ENCODE measurements at regions of chr3 and their contacts with region 1.

Region 1: GRCh38 chr3:194632809-194633348 is 340 bp downstream of the TMEM44 start:
- DNase-seq: no peak
- ATAC-seq: peak; percentile 51
- H3K4me3 ChIP-seq: peak overlapping the region; percentile 30 to 79 (median 58)
- H3K4me3 Mint-ChIP-seq: peak overlapping the region; percentile 86
- H3K27ac ChIP-seq: no peak overlapping the region
- H3K27ac Mint-ChIP-seq: peak overlapping the region; percentile 56
- H3K4me1 ChIP-seq: peaks cover 4 to 5% of the 10 kb centered on the region in 2 donors
- H3K4me1 Mint-ChIP-seq: peaks cover 9% of the 10 kb centered on the region
- H3K27me3 ChIP-seq: no peaks in the 10 kb centered on the region
- H3K27me3 Mint-ChIP-seq: no peaks in the 10 kb centered on the region
- CTCF ChIP-seq: no peak

Region 2: DNA sequence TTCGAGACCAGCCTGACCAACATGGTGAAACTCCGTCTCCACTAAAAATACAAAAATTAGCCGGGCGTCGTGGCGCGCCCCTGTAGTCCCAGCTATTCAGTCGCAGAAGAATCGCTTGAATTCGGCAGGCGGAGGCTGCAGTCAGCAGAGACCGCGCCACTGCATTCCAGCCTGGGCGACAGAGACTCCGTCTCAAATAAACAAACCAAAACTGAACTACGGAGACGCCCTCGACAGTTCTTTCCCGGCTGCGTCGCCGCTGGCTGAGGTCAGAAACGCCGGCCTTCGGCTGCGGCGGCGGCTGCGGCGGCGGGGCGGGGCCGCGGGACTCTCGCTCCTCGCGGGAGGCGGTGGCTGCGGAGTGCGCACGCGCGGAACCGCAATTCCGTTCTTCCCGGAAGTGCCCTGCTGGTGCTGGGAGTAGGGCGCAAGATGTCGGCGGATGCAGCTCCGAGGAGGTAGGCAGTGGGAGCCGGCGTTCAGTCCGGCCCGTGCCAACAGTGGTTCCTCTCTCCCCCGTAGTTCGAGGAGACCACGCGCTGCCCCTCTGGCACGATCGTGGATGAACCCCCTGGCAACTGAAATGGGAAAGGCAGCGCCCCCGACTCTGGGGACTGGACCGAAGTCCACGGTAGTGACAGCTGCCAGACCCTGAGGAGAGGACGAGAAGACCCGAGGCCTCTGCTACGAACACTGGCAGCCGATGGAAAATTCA is 49.1 kb before region 1 on chr3:
- CTCF ChIA-PET with region 1: interaction called, 3 read pairs
- POLR2A ChIA-PET with region 1: interaction called, 4 read pairs
- intact Hi-C with region 1: loop called (anchors 2 kb)
- DNase-seq: peak; percentile 95
- ATAC-seq: peak; percentile 93
- H3K4me3 ChIP-seq: peak overlapping the region; percentile 81 to 98 (median 91)
- H3K4me3 Mint-ChIP-seq: peak overlapping the region; percentile 97
- H3K27ac ChIP-seq: peak overlapping the region; percentile 86 to 88
- H3K27ac Mint-ChIP-seq: peak overlapping the region; percentile 98
- H3K4me1 ChIP-seq: peaks cover 9% of the 10 kb centered on the region in 2 donors
- H3K4me1 Mint-ChIP-seq: peaks cover 21% of the 10 kb centered on the region
- H3K27me3 ChIP-seq: no peaks in the 10 kb centered on the region
- H3K27me3 Mint-ChIP-seq: no peaks in the 10 kb centered on the region
- CTCF ChIP-seq: no peak

Region 3: DNA sequence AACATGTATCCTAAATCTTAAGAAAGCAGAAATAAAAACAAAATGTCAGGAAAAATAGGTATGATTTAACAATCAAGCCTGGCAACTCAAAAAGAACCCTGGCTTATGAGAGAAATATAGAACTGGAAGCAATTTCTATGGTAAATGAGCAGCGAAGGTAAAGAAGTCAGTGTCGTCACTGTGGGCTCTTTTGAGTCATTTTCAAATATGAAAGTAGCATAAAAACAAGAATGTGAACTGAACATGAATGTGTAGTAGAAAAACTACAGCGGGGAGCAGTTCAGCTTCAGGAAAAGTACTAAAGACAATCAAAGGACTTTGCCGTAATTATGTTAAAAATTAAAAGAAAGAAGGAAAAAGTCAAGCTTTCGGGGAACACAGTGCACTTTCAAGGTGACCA is 21.6 kb after region 1 on chr3:
- CTCF ChIA-PET with region 1: no interaction called
- POLR2A ChIA-PET with region 1: interaction called, 10 read pairs
- intact Hi-C with region 1: no loop called
- DNase-seq: no peak
- ATAC-seq: no peak
- H3K4me3 ChIP-seq: no peak overlapping the region
- H3K4me3 Mint-ChIP-seq: no peak overlapping the region
- H3K27ac ChIP-seq: no peak overlapping the region
- H3K27ac Mint-ChIP-seq: no peak overlapping the region
- H3K4me1 ChIP-seq: no peaks in the 10 kb centered on the region
- H3K4me1 Mint-ChIP-seq: no peaks in the 10 kb centered on the region
- H3K27me3 ChIP-seq: no peaks in the 10 kb centered on the region
- H3K27me3 Mint-ChIP-seq: no peaks in the 10 kb centered on the region
- CTCF ChIP-seq: no peak

Measured in B cell (primary cell).